ENCODE measurements at regions of chr14 and their contacts with region 1.

Region 1: DNA sequence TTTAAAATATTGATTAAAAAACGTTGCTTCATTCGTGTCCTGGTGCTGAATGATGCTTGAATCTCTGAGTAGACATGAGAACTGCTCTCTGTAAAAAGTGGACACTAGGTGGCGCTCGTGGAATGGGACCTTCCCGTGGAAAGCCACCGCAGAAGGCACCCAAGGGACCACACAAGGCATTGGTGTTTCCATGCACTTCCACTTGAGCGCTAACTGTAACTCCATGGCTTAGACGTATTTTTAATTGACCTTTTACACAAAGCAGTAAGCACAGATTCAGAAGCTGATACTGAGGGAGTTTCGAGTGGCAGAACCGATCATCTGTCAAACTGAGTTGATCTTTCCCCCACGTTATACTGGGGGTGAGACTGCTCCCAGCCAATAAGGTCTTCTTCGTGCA is 135.3 kb downstream of the PRKCH start:
- DNase-seq: peak; percentile 82
- H3K4me3 Mint-ChIP-seq: no peak overlapping the region
- H3K27ac Mint-ChIP-seq: peak overlapping the region; percentile 33
- H3K4me1 Mint-ChIP-seq: peaks cover 88% of the 10 kb centered on the region
- H3K27me3 Mint-ChIP-seq: no peaks in the 10 kb centered on the region

Region 2: GRCh38 chr14:61321385-61322010 is 135.2 kb before region 1 on chr14 and contains the start of gene PRKCH:
- CTCF ChIA-PET with region 1: interaction called, 12 read pairs
- POLR2A ChIA-PET with region 1: interaction called, 27 read pairs
- DNase-seq: peak; percentile 91
- H3K4me3 Mint-ChIP-seq: peak within 1 kb of the TSS; percentile 87
- H3K27ac Mint-ChIP-seq: peak within 1 kb of the TSS; percentile 86
- H3K4me1 Mint-ChIP-seq: peaks cover 24% of the 10 kb centered on the region
- H3K27me3 Mint-ChIP-seq: no peaks in the 10 kb centered on the region
- total RNA-seq, gene PRKCH: 186 to 195 TPM

Region 3: DNA sequence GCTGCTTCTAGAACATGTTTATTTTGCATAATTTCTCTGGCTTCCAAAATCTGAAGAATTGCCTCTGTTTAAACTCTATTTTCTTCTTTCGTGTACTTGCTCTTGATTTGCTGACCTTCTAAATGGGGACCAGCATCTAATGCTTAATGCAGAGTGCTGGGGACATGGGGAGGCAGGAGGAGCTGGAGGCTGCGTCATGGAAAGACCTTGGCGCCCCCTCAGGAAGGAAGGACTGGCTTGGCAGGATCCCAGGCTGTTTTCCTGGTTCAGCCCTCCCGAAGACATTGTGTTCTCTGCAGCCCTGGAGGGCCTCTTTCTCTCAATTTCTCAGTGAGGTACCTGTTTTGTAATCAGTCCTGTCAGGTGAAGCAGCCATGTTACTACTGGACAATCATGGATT is 129.9 kb before region 1 on chr14:
- CTCF ChIA-PET with region 1: interaction called, 12 read pairs
- POLR2A ChIA-PET with region 1: interaction called, 119 read pairs
- DNase-seq: no peak
- H3K4me3 Mint-ChIP-seq: peak overlapping the region; percentile 87
- H3K27ac Mint-ChIP-seq: peak overlapping the region; percentile 92
- H3K4me1 Mint-ChIP-seq: peaks cover 63% of the 10 kb centered on the region
- H3K27me3 Mint-ChIP-seq: no peaks in the 10 kb centered on the region

Region 4: DNA sequence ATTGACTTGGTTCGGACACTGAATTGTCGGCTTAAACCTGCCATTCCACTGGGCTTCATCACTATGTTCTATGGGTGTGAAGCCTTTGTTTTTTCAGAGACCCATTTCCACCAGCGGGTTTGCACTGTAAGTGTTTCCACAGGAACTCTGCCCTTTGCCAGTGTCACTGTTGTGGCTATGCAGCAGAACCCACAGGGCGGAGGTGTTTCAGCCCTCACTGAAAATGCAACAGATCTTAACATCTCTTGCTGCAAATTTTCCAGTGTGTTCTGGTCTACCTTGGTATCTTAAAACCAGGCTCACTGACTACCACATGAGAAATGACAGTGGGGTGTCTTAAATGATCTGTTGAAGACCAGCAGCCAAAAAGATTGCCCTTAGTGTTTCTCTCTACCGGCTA is 114.2 kb before region 1 on chr14:
- CTCF ChIA-PET with region 1: interaction called, 7 read pairs
- POLR2A ChIA-PET with region 1: interaction called, 119 read pairs
- DNase-seq: peak; percentile 91
- H3K4me3 Mint-ChIP-seq: peak overlapping the region; percentile 62
- H3K27ac Mint-ChIP-seq: peak overlapping the region; percentile 95
- H3K4me1 Mint-ChIP-seq: peaks cover 94% of the 10 kb centered on the region
- H3K27me3 Mint-ChIP-seq: no peaks in the 10 kb centered on the region

Region 5: DNA sequence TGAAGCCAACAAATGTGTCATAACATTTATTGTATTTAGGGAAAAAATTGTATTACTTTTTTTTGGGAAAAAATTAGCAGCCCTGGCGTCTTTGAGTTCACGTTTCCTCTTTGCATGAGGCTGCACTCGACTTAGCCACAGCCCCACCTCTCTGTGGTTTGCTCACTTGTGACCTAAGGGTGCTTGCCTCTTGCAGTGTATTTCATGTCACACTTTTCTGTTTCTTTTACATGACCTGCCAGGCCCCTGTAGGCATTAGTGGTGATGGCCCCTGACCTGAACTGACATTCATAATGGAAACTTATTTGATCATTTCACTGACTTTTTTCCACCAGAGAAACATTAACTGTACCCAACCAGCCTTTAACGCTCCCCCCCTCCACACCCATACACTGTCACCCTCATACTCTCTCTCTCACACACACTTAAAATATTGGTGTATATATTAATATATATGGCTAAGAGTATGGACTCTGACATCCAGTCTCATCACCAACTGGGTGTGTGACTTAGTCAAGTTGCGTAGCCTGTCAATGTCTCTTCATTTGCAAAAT is 12.4 kb before region 1 on chr14:
- CTCF ChIA-PET with region 1: interaction called, 5 read pairs
- POLR2A ChIA-PET with region 1: interaction called, 19 read pairs
- DNase-seq: peak; percentile 87
- H3K4me3 Mint-ChIP-seq: peak overlapping the region; percentile 52
- H3K27ac Mint-ChIP-seq: peak overlapping the region; percentile 98
- H3K4me1 Mint-ChIP-seq: peaks cover 94% of the 10 kb centered on the region
- H3K27me3 Mint-ChIP-seq: no peaks in the 10 kb centered on the region